Head of caudate nucleus (tissue), 42 donors: ENCODE measurements at regions of chr17 and their contacts with region 1.

Region 1: DNA sequence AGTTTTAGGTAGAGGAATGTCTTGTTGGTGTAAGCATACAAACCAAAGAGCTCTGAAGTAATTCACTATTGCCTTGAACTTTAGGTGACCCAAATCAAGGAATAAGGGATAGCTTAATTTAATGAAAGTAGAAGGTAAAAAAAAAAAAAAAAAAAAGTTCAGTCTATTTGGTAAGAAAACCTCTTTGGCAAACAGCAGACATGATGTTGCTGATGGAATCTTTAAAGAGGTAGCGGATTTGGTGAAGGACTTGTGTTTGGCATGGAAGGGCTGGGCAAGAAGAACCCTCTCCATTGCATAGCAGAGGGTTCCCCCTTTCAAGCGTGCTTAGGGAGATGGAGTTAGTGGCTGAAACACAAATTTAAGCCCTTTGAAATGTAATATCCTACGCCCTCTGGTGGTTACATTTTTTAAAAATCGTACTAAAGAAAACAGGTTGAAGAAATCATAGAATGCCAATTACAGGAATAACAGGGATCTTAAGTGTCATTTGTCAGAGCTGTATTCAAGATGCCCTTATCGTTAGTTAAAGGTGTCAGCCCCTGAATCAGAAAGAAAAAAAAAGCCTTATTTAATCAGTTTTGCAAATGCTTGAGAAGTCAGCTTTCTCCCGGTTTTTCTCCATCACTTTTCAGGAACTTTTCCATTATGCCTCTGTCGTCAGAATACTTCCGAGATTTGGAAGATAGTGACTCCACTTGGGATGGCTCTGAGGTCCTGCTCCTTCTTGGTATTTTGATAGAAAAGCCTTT is 383.1 kb downstream of the KCNJ2 start:
- DNase-seq: peak in 24 of 42 donors; percentile 8 to 66 (median 28)

Region 2: DNA sequence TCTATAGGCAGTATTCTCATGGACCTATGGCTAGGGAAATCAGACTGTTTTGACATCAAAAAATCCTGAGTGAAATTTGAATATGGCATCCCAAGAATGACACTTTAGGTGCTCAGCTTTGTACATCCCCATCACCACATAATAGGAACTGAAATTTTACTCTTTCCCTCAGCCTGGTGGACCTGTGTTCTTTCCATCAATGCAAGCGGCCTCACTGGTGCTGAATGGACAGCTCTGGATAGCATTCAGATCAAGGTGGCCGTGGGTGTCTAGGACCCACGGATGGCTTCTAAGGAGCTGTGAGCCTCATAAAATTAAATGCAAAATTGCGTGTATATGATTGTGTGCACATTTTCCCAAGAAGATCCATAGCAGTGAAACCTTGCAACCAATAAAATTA is 985.3 kb before region 1 on chr17:
- intact Hi-C with region 1: loop called (anchors 10 kb)
- DNase-seq: no peak

Region 3: GRCh38 chr17:70119983-70120382 is 432.4 kb before region 1 on chr17:
- intact Hi-C with region 1: no loop called
- DNase-seq: no peak

Region 4: DNA sequence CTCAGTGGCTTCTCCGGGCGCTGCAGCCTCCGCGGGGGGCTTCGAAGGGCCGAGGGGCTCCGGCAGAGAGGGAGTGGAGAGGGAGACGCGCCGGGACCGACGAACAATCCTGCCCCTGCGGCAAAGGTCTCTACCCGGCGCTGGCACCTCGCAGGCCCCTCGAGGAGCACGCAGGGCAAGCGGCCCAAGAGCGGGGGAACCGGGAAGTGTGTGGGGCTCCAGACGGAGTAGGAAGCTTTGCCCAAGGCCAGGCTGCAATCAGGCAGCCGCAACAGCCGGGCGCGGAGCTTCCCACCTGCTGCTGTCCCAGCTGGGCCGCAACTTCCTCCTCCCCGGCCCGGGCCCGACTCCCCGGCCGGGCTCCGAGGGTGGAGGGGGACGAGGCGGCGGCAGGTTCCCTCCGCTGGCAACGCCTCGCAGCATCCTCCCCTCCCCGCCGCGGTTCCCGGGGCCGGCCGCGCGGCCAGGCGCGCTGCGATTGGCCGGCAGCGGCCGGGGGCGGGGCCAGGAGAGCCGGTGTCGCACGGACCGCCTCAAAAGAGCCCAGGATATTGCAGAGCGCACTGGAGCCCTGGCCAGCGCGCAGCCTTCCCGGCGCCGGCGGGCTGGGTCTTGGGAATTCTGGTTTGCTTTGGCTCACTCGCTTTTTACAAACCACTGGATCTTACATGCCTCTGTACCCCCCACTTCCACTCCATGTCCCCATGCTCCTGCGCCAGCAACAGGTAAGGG is 383.3 kb before region 1 on chr17 and contains the start of gene KCNJ2:
- intact Hi-C with region 1: loop called (anchors 5 kb)
- DNase-seq: peak; percentile 77 to 96 (median 93)

Region 5: DNA sequence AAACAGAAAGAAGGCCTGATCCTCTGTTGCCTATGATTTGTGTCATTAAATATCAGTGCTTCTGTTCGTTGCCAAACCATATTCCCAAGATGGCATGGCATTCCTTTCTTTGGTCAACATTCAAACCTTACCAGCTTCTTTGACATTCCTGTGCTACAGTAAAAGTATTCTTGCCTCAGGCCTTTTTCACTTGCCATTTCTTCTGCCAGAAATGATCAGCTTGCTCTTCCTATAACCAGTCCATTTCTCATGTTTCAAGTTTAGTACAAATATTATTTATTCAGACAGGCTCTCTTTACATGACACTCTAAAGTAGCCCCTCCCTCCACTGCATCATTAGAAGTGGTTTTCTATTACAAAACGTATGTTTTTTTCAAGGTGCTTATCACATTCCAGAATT is 104.8 kb before region 1 on chr17:
- intact Hi-C with region 1: no loop called
- DNase-seq: no peak

Region 6: GRCh38 chr17:70604854-70605253 is 52.4 kb after region 1 on chr17:
- intact Hi-C with region 1: loop called (anchors 10 kb)
- DNase-seq: no peak